AG04450 (cell line): ENCODE measurements at regions of chr17 and their contacts with region 1.

Region 1: GRCh38 chr17:4966844-4967538 is 626 bp downstream of the SPAG7 start:
- DNase-seq: peak; percentile 99
- H3K4me3 ChIP-seq: peak overlapping the region; percentile 84
- H3K27ac ChIP-seq: peak overlapping the region; percentile 98
- H3K27me3 ChIP-seq: no peaks in the 10 kb centered on the region
- CTCF ChIP-seq: no peak

Region 2: DNA sequence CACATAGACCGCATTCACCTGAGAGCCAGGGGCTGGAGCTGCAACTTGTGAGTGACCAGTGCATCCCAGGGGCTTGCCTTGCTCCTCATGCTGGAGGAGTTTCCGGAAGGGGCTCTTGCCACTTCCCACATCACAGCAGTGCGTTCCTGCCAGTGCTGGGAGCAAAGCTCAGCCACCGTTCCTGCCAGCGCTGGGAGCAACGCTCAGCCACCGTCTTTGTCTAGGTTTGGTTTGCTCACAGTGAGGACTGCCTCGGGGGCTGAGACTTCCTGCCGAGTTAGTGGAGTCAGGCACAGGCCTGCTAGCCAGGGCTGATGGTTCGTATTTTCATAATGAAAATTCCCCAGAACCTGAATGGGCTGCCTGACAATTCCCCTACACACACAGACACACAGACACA is 58.7 kb before region 1 on chr17:
- CTCF ChIA-PET with region 1: interaction called, 11 read pairs
- POLR2A ChIA-PET with region 1: interaction called, 5 read pairs
- DNase-seq: no peak
- H3K4me3 ChIP-seq: no peak overlapping the region
- H3K27ac ChIP-seq: no peak overlapping the region
- H3K27me3 ChIP-seq: peaks cover 3% of the 10 kb centered on the region
- CTCF ChIP-seq: no peak

Region 3: DNA sequence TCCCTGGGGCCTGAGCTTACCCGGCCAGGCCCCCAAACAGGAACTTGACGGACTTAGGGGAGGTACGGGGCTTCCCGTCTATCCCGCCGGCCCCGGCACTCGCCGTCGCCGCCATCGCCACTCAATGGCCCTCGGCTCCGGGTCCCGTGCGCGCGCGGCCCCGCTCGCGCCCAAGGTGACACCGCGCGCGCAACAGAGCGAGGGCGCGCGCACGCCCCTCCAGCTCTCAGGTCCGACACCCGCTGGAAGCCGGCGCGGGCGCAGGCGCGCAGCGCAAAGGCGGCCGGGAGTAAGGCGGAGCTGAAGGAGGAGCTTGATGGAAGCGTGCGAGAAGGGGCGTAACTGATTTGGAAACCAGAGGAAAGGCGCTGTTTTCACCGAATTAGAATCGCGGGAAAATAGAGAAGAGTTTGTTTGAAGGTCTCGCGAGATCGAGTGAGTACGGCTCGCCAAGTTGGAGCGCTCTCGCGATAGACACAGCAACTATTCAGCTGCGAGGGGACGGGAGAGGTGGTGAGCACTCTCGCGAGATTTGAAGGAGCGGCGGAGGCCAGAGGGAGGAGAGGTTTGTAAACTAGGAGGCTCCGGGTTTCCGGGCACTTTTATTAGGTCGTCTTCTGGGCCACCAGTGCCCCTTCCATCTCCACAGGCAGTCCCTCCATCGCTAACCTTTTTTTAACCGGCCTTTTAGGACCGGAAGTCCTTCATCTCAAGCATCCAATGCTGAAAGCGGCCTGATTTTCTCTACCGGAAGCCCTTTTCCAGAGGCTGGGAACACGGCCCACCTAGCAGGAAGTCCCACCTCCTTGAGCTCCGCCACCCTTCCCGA is 27.0 kb before region 1 on chr17 and contains the starts of genes RNF167 and SLC25A11:
- CTCF ChIA-PET with region 1: no interaction called
- POLR2A ChIA-PET with region 1: interaction called, 128 read pairs
- DNase-seq: peak; percentile 99
- H3K4me3 ChIP-seq: peak within 1 kb of the TSS; percentile 92
- H3K27ac ChIP-seq: peak within 1 kb of the TSS; percentile 98
- H3K27me3 ChIP-seq: no peaks in the 10 kb centered on the region
- CTCF ChIP-seq: no peak
- polyA plus RNA-seq, gene RNF167: 63.1 and 64.3 TPM in 2 replicates
- polyA plus RNA-seq, gene SLC25A11: 44.7 and 50.0 TPM in 2 replicates

Region 4: GRCh38 chr17:4948931-4949320 is 18.1 kb before region 1 on chr17:
- CTCF ChIA-PET with region 1: interaction called, 3 read pairs
- POLR2A ChIA-PET with region 1: interaction called, 128 read pairs
- DNase-seq: no peak
- H3K4me3 ChIP-seq: peak overlapping the region; percentile 99
- H3K27ac ChIP-seq: peak overlapping the region; percentile 91
- H3K27me3 ChIP-seq: no peaks in the 10 kb centered on the region
- CTCF ChIP-seq: no peak

Region 5: GRCh38 chr17:4956493-4957061 is 10.4 kb before region 1 on chr17:
- CTCF ChIA-PET with region 1: interaction called, 3 read pairs
- POLR2A ChIA-PET with region 1: interaction called, 128 read pairs
- DNase-seq: no peak
- H3K4me3 ChIP-seq: no peak overlapping the region
- H3K27ac ChIP-seq: no peak overlapping the region
- H3K27me3 ChIP-seq: no peaks in the 10 kb centered on the region
- CTCF ChIP-seq: peak; percentile 6; the same call in 1 of the 2 replicates

Region 6: GRCh38 chr17:4980644-4981216 is 13.7 kb after region 1 on chr17:
- CTCF ChIA-PET with region 1: interaction called, 13 read pairs
- POLR2A ChIA-PET with region 1: interaction called, 11 read pairs
- DNase-seq: no peak
- H3K4me3 ChIP-seq: no peak overlapping the region
- H3K27ac ChIP-seq: no peak overlapping the region
- H3K27me3 ChIP-seq: no peaks in the 10 kb centered on the region
- CTCF ChIP-seq: peak; percentile 71

Region 7: GRCh38 chr17:4986951-4987766 is 20.2 kb after region 1 on chr17 and contains the start of gene CAMTA2:
- CTCF ChIA-PET with region 1: interaction called, 6 read pairs
- POLR2A ChIA-PET with region 1: interaction called, 11 read pairs
- DNase-seq: no peak
- H3K4me3 ChIP-seq: peak within 1 kb of the TSS; percentile 85
- H3K27ac ChIP-seq: peak within 1 kb of the TSS; percentile 52
- H3K27me3 ChIP-seq: no peaks in the 10 kb centered on the region
- CTCF ChIP-seq: peak; percentile 62
- polyA plus RNA-seq, gene CAMTA2: 18.0 and 20.0 TPM in 2 replicates